ENCODE measurements at regions of chr1 and their contacts with region 1.

Region 1: DNA sequence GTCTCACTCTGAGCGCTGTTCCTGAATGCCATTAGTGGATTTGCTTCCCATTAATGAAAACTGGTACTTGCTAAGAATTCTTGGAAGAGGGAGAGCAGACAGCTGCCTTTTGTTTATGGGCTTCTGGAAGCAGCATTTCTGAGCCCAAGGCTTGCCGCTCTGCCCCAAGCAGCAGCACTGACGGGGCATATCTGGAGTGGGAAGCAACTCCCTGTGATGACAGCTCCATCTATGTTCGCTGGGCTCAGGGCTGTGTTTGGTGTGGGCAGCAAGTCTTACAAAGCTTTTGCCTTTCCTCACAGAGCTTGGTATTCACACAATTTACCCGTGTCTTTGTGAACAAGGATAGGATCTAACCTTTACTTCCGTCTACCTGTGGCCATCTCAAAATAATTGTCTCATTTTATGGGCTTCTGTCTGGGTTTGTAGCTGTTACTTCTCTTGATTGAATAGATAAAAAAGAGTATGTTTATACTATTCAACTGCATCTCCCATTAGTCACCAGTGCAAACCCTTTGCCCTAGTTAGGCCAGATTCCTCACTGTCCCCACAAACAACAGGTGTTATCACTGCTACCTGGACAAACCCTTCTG is 72.3 kb downstream of the DDX20 start:
- DNase-seq: no peak
- ATAC-seq: no peak
- H3K4me3 ChIP-seq: no peak overlapping the region
- H3K27ac ChIP-seq: no peak overlapping the region
- H3K4me1 ChIP-seq: no peaks in the 10 kb centered on the region
- H3K27me3 ChIP-seq: peaks cover 2% of the 10 kb centered on the region; the same call in 1 of the 2 replicates
- CTCF ChIP-seq: no peak

Region 2: DNA sequence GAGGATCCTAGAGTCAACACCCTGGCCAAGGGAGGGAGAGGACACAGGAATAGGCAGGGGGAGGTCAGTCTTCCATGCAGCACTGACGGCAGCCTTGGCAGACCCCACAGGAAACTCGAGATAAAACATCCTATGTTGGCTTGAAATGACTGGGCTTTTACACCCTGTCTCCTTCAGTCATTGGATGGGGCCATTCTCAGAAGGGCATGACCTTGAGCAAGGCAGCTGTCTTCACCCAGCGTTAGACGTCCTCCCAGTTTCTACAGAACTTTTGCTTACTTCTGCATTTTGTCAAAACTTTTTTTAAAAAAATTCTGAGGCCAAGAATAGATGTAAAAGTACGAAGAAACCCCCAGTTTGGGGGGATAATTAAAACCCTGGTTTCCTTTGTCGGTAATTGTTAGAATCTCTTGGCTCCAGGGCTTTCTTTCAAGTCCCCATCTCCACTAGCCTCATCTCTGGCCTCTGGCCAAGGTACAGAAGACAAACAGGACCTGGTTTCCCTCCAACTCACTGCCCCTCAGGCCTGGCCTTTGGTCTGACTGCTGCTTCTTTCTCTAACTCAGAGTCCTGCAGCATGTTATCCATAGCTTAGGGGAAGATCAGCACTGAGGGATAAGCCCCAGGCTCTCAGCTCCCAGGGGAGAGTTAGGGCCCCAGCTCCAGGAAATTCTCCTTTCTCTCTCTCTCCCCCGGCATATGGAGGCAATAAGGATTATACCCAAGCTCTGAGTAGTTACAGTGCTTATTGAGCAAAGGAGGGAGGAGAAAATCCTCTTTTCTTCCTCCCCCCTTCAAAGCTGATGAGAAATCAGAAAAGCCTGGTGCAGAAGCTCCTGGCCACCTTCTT is 213.1 kb after region 1 on chr1:
- CTCF ChIA-PET with region 1: no interaction called
- POLR2A ChIA-PET with region 1: interaction called, 13 read pairs
- in situ Hi-C with region 1: no loop called
- intact Hi-C with region 1: no loop called
- DNase-seq: no peak
- ATAC-seq: no peak
- H3K4me3 ChIP-seq: no peak overlapping the region
- H3K27ac ChIP-seq: no peak overlapping the region
- H3K4me1 ChIP-seq: no peaks in the 10 kb centered on the region
- H3K27me3 ChIP-seq: peaks cover 2% of the 10 kb centered on the region; the same call in 1 of the 2 replicates
- CTCF ChIP-seq: no peak